PC-3 (cell line): ENCODE measurements at regions of chr4 and their contacts with region 1.

Region 1: DNA sequence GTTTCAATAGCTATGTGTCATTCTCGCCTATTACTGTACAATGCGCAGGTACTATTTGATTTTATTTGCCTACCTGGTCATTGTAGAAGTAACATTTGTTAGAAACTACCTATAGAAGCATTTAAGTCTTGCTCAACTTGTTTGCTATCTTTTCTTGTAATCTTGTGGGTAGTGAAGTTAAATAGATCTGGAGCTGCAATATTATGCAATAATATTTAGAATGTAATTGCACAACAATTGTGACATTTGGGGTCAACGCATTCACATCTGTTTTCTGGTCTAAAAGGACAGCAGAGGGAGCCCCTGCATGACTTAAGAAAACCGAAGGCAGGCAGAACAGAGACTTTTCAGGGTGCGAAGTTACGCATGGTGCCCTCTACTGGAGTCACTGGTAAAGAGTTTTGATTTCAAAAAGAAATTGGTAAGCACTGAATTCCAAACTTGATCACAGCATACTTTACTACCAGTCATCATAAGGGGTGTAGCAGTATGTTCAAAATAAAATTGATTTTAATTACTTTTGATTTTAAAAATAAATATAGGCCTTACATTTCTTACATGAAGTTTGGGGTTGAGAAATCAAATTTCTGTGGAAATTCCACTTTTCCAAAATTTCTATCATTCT is 503.2 kb upstream of the FAM241A start:
- DNase-seq: peak; percentile 81
- ATAC-seq: peak; percentile 71
- H3K4me3 ChIP-seq: no peak overlapping the region
- H3K27ac ChIP-seq: no peak overlapping the region
- H3K4me1 ChIP-seq: peaks cover 6% of the 10 kb centered on the region; the same call in 1 of the 2 replicates
- H3K27me3 ChIP-seq: peaks cover 23% of the 10 kb centered on the region
- CTCF ChIP-seq: peak; percentile 89

Region 2: DNA sequence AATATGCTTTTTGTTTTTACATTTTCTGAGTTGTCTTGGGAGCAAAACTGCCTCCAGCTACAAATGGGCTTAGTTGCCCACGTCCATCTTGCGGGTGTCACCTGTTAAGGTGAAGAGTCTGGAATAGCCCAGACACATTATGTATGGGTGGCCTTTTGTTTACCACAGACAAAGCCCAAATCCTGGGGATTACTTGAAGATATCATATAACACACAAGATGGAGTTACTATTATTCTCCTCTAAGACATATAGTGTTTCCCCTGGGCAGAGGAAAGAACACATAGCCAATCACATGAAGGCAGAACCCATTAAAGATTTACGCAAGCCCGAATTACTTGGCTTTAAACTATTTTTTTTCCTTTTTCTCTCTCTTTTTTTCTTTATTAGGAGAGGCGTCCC is 122.4 kb before region 1 on chr4:
- CTCF ChIA-PET with region 1: no interaction called
- POLR2A ChIA-PET with region 1: no interaction called
- intact Hi-C with region 1: no loop called
- DNase-seq: no peak
- ATAC-seq: no peak
- H3K4me3 ChIP-seq: no peak overlapping the region
- H3K27ac ChIP-seq: no peak overlapping the region
- H3K4me1 ChIP-seq: no peaks in the 10 kb centered on the region
- H3K27me3 ChIP-seq: no peaks in the 10 kb centered on the region
- CTCF ChIP-seq: no peak

Region 3: DNA sequence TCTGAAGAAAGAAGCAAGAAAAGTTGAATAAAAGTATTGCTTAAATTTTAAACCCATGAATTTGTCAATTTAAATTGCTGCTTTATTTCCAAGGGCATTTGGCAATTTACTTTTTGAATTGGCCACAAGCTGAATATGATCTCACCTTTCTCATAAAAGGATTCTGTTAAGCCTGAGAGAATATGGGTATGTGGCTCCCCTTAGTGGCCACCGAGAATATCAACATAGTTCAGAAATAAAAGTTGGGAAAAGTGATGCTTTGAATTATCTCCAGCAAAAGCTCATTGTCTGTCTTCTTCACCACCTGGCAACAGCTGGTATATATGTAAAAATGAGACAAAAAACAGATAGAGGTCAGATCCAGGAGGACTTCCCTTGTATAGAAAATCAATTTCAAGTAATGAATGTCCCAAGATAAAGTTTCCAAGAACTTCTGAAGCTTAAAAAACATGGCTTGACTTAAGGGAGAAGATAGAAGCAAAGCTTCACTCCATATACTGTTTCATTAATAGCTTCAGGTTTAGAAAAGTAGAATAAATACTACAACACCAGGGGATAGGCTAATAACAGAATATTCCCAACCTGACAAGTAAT is 212.5 kb after region 1 on chr4:
- CTCF ChIA-PET with region 1: no interaction called
- POLR2A ChIA-PET with region 1: no interaction called
- intact Hi-C with region 1: loop called (anchors 1 kb)
- DNase-seq: peak; percentile 49
- ATAC-seq: peak; percentile 64
- H3K4me3 ChIP-seq: no peak overlapping the region
- H3K27ac ChIP-seq: no peak overlapping the region
- H3K4me1 ChIP-seq: no peaks in the 10 kb centered on the region
- H3K27me3 ChIP-seq: peaks cover 30% of the 10 kb centered on the region
- CTCF ChIP-seq: peak; percentile 68

Region 4: GRCh38 chr4:111937368-111937767 is 295.3 kb after region 1 on chr4:
- CTCF ChIA-PET with region 1: no interaction called
- POLR2A ChIA-PET with region 1: no interaction called
- intact Hi-C with region 1: loop called (anchors 2 kb)
- DNase-seq: peak; percentile 43
- ATAC-seq: peak; percentile 70
- H3K4me3 ChIP-seq: no peak overlapping the region
- H3K27ac ChIP-seq: no peak overlapping the region
- H3K4me1 ChIP-seq: no peaks in the 10 kb centered on the region
- H3K27me3 ChIP-seq: peaks cover 30% of the 10 kb centered on the region; the same call in 1 of the 2 replicates
- CTCF ChIP-seq: peak; percentile 56